ENCODE measurements at regions of chr14 and their contacts with region 1.

Region 1: DNA sequence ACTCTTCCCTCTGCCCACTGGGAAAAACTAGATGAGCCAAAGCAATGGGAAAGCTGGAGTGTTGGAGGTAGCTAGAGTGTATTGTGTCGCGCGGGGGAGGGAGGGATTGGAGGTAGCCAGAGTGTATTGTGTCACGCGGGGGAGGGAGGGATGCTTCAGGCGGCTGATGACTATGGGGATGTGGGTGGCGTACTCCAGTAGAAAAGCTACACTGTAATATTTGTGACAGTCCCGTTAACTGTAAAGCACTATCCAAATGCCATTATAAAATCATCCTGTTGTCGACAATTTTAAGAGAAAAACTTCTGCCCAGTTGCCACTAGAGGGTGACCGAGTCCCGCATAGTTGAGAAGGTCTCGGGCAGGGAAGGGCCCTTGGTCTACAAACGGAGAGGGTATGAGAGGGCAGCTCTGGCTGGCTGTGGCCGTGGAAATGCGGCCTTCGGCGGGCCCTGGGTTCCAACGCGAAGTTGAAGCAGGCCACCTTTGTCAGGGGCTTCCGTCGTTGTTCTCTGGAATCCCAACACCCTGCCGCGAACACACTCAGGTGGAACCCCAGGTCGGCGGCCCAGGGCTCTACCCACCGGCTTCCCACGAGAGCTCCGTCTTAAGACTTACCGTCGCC is 15.1 kb upstream of the PLEK2 start:
- DNase-seq: peak; percentile 61
- ATAC-seq: peak; percentile 98
- H3K4me3 Mint-ChIP-seq: no peak overlapping the region
- H3K27ac Mint-ChIP-seq: no peak overlapping the region
- H3K4me1 Mint-ChIP-seq: peaks cover 3% of the 10 kb centered on the region
- H3K27me3 Mint-ChIP-seq: peaks cover 11% of the 10 kb centered on the region
- CTCF ChIP-seq: peak; percentile 76

Region 2: DNA sequence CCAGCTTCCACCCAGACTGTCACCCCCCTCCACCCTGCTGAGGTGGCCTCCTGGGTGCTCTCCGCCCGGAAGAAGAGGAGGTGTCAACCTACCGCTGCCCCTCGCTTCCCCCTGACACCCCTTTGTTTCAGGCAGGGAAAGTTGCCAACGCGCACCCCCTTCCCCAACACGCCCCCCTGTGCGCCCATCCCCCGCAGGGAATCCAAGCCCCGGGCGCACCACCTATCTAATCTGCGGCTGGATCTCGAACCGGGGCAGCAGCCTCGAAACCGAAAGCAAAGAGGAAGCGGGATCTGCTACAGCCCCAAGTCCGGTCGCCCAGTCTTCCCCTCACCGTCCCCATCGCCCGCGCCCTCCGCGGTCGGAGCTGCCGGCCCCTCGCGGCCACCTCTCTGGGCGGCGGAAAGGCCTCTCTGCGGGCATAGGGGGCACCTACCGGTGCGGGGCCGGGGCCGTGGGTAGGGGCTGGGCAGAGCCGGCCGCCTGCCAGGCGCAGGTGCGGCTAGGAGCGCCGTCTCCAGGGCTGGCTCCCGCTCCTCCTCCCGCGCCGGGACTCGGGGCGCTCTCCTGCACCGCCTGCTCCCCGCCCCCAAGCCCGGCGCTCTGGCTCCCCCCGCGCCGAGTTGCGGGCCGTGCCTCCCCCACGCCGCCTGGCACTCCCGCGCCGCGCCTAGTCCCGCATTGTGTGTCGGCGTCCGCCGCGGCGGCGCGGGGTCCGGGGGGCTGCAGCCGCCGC is 87.7 kb after region 1 on chr14:
- CTCF ChIA-PET with region 1: interaction called, 11 read pairs
- POLR2A ChIA-PET with region 1: no interaction called
- intact Hi-C with region 1: no loop called
- DNase-seq: peak; percentile 53
- ATAC-seq: peak; percentile 53
- H3K4me3 Mint-ChIP-seq: peak overlapping the region; percentile 88
- H3K27ac Mint-ChIP-seq: peak overlapping the region; percentile 85
- H3K4me1 Mint-ChIP-seq: peaks cover 41% of the 10 kb centered on the region
- H3K27me3 Mint-ChIP-seq: no peaks in the 10 kb centered on the region
- CTCF ChIP-seq: no peak

Region 3: DNA sequence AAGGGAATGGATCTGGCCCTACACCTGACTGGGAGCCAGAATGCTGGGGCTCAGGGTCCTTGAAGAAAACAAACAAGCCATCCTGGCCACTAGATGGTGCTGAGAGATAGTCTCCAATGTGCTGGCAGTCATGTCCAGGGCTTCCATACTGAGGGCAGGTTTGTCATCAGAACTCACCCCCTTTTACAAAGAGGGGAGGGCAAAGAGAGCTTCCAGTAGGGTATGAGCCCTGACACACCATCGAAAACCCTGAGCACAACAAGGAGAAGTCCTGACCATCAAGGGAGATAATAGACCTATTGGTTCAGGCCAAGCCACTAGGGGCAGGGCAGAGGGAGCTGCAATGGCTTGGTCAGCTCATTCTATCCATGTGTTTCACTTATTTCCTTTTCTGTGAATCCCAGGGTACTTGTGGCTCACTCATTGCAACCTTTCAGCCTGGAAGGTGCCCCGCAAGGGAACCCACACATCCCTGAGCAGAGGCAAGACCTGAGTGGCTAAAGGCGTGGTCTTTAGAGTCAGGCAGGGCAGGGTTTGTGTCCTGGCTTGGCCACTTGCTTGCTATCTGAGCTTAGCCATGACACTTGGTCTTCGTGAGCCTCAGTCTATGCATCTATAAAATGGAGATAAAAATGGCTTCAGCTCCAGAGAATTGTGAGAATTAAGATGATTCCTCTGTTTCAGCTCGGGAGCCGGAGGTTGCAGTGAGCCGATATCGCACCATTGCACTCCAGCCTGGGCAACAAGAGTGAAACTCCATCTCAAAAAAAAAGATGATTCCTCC is 99.8 kb after region 1 on chr14:
- CTCF ChIA-PET with region 1: interaction called, 24 read pairs
- POLR2A ChIA-PET with region 1: no interaction called
- intact Hi-C with region 1: loop called (anchors 1 kb)
- DNase-seq: no peak
- ATAC-seq: peak; percentile 77
- H3K4me3 Mint-ChIP-seq: no peak overlapping the region
- H3K27ac Mint-ChIP-seq: no peak overlapping the region
- H3K4me1 Mint-ChIP-seq: peaks cover 3% of the 10 kb centered on the region
- H3K27me3 Mint-ChIP-seq: peaks cover 51% of the 10 kb centered on the region
- CTCF ChIP-seq: peak; percentile 20

Region 4: GRCh38 chr14:67532998-67533753 is 106.1 kb after region 1 on chr14 and contains the start of gene PLEKHH1:
- CTCF ChIA-PET with region 1: interaction called, 6 read pairs
- POLR2A ChIA-PET with region 1: no interaction called
- intact Hi-C with region 1: loop called (anchors 1 kb)
- DNase-seq: peak; percentile 30
- ATAC-seq: peak; percentile 82
- H3K4me3 Mint-ChIP-seq: peak within 1 kb of the TSS; percentile 79
- H3K27ac Mint-ChIP-seq: no peak within 1 kb of the TSS
- H3K4me1 Mint-ChIP-seq: peaks cover 5% of the 10 kb centered on the region
- H3K27me3 Mint-ChIP-seq: peaks cover 33% of the 10 kb centered on the region
- CTCF ChIP-seq: no peak
- total RNA-seq, gene PLEKHH1: 0.20 and 0.61 TPM in 2 replicates

Region 5: DNA sequence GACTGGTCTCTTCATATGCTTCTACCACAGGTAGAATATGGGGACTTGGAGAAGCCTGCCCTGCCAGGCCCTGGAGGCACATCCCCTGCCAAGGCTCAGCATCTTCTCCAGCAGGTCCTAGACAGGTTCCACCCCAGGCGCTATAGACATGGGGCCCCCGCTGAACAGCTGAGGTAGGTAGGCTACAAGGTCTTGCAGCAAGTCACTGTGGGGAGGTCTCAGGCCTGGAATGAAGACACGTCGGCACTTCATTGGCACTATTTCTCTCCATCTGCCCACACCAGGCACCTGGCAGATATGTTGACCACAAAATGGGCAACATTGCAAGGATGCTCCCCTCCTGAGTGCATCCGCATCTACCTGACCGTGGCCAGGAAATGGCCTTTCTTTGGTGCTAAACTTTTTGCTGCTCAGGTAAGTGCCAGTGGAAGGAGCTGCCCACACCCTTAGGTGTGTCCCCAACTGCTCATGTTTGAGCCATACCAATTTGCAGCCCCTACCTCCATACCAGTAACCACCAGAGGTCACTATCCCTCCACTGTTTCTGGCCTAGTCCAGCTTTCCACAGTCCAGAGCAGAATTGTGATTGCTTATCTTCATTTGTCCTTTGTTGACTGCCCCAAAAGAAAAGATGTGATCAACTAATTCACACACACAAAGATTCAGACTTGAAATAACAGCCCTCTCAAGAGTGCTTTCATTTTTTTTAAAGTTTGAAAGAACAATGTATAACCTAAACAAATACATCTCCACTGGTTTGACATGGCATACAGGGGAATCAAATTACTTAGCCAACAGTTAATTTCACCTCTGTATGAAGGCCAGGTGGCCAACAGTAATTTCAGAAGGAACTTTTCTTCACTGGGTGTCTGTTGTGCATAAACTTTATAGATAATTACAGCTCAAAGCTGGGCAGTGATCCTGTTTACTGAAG is 156.9 kb after region 1 on chr14:
- CTCF ChIA-PET with region 1: interaction called, 23 read pairs
- POLR2A ChIA-PET with region 1: no interaction called
- intact Hi-C with region 1: no loop called
- DNase-seq: no peak
- ATAC-seq: peak; percentile 80
- H3K4me3 Mint-ChIP-seq: no peak overlapping the region
- H3K27ac Mint-ChIP-seq: no peak overlapping the region
- H3K4me1 Mint-ChIP-seq: peaks cover 5% of the 10 kb centered on the region
- H3K27me3 Mint-ChIP-seq: no peaks in the 10 kb centered on the region
- CTCF ChIP-seq: peak; percentile 46

Region 6: DNA sequence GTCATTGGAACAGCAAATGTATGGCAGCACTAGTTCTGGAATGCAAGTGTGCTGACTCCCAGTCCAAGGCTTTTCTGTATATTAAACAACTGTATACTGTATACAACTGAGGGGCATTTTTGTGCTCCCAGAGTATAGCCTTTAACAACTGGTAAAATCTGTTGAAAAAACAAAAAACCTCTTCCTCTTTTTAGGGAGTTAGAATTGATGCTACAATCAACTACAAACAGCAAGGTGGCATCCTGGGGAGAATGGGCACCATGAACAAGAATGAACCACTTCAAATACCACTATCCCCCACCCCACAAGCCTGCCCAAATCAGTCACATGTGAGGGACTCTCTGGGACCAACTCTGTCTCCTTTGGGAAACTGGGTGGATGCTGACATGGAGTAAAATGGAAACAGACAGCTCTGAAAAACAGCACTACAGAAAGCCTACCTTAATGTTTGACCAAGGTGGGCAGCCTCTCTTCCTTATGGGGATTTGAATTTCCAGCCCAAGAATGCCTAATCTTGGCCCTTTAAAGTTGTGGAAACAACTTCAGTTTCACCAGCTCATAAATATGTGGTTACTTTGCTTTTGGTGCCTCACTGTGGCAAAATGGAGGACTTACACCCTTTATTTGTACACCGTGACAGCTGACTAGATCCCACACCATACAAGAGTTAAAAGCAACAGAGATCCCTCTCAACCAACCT is 239.8 kb after region 1 on chr14:
- CTCF ChIA-PET with region 1: interaction called, 24 read pairs
- POLR2A ChIA-PET with region 1: no interaction called
- intact Hi-C with region 1: loop called (anchors 1 kb)
- DNase-seq: no peak
- ATAC-seq: peak; percentile 87
- H3K4me3 Mint-ChIP-seq: peak overlapping the region; percentile 44
- H3K27ac Mint-ChIP-seq: peak overlapping the region; percentile 68
- H3K4me1 Mint-ChIP-seq: peaks cover 58% of the 10 kb centered on the region
- H3K27me3 Mint-ChIP-seq: no peaks in the 10 kb centered on the region
- CTCF ChIP-seq: no peak

Region 7: DNA sequence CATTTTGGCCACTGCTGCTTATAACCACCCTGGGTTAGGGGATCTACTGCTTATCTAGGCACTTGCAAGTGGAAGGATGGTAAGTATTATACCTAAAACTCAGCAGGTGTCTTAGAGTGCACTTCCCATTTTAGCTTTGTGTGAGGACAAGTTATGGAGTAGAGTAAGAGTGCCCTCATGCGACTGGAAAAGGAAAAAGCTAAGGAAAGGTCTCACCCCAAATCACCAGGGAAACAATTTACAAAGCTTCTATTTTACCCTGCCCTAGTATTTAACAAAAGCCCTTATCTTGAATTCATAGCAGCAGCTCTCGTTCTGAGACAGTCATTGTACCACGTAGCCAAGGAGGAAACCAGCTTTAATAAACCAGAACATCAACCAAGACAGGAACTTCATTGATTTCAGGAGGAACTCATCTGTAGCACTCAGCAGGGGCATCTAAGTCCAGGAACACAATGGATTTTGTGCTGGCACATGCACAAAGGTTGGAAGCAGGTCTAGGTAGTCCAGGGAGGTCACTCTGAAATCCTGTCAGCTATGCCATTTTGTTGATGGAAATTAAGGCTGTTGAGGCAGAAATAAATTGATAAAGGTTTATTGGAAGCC is 277.5 kb after region 1 on chr14:
- CTCF ChIA-PET with region 1: interaction called, 33 read pairs
- POLR2A ChIA-PET with region 1: interaction called, 13 read pairs
- intact Hi-C with region 1: loop called (anchors 1 kb)
- DNase-seq: no peak
- ATAC-seq: peak; percentile 81
- H3K4me3 Mint-ChIP-seq: no peak overlapping the region
- H3K27ac Mint-ChIP-seq: no peak overlapping the region
- H3K4me1 Mint-ChIP-seq: no peaks in the 10 kb centered on the region
- H3K27me3 Mint-ChIP-seq: no peaks in the 10 kb centered on the region
- CTCF ChIP-seq: no peak